GM13976 (cell line): ENCODE measurements at regions of chr7 and their contacts with region 1.

Region 1: GRCh38 chr7:142873281-142873787 is 12.2 kb downstream of the TRPV6 start:
- DNase-seq: peak; percentile 72
- CTCF ChIP-seq: no peak

Region 2: GRCh38 chr7:142956951-142957623 is 83.8 kb after region 1 on chr7:
- in situ Hi-C with region 1: no loop called
- DNase-seq: no peak
- CTCF ChIP-seq: no peak

Region 3: GRCh38 chr7:143008007-143008901 is 134.9 kb after region 1 on chr7:
- in situ Hi-C with region 1: loop called (anchors 10 kb)
- DNase-seq: peak; percentile 64
- CTCF ChIP-seq: peak; percentile 90